Activated T-helper 1 cell treated with anti-CD3 and anti-CD28 coated beads, Interleukin-12 subunit alpha, Interleukin-12 subunit beta, Interleukin-2, Interleukin-4 antibody, amounts not matched to agents 30 ng/mL and 10 ng/mL and 1 ng/mL, durations not matched to agents 14 hours and 24 hours and 36 hours (primary cell): ENCODE measurements at regions of chr19 and their contacts with region 1.

Region 1: DNA sequence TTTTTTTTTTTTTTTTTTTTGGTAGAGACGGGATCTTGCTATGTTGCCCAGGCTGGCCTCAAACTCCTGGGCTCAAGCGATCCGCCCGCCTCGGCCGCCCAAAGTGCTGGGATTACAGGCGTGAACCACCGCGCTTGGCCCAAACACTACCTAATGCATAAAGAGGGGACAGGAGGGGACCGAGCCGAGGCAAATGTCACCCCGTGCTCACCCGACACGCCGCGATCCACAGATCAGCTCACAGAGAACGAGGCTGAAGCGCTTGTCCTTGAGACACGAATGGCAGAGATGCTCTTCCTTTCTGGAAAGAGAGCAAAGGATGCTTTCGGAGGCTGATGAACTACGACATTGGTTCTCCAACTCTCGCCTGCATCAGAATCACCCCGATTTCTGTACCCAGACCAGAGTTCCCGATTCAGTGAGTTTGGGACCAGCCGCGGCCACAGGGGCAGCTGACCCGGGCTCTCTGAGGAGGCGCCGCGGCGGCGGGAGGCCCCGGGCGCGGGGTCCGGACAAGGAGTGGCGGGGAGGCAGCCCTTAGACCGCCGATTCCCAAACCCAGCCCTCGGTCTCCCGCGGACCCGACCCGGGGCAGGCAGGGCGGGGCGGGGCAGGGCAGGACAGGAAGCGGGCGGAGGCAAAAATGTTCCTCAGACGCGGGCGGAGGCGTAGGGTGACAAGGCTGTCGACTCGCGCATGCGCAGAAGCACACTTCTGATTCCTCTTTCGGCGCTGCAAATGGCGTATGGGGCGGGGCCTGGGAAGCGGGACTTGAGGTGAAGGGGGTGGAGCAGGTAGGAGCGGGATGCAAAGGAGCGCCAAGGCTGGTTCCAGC is at the start of gene ZNF699:
- DNase-seq: peak; percentile 98
- H3K4me3 Mint-ChIP-seq: peak within 1 kb of the TSS; percentile 87
- H3K27ac Mint-ChIP-seq: peak within 1 kb of the TSS; percentile 94
- H3K4me1 Mint-ChIP-seq: peaks cover 29% of the 10 kb centered on the region
- H3K27me3 Mint-ChIP-seq: peaks cover 3% of the 10 kb centered on the region
- total RNA-seq, gene ZNF699: 4.7 and 5.0 TPM in 2 replicates

Region 2: GRCh38 chr19:9140159-9140874 is 169.0 kb before region 1 on chr19 and contains the start of gene ZNF317:
- intact Hi-C with region 1: loop called (anchors 1 kb)
- DNase-seq: peak; percentile 88
- H3K4me3 Mint-ChIP-seq: peak within 1 kb of the TSS; percentile 95
- H3K27ac Mint-ChIP-seq: peak within 1 kb of the TSS; percentile 94
- H3K4me1 Mint-ChIP-seq: peaks cover 33% of the 10 kb centered on the region
- H3K27me3 Mint-ChIP-seq: no peaks in the 10 kb centered on the region
- total RNA-seq, gene ZNF317: 50.7 and 53.3 TPM in 2 replicates

Region 3: DNA sequence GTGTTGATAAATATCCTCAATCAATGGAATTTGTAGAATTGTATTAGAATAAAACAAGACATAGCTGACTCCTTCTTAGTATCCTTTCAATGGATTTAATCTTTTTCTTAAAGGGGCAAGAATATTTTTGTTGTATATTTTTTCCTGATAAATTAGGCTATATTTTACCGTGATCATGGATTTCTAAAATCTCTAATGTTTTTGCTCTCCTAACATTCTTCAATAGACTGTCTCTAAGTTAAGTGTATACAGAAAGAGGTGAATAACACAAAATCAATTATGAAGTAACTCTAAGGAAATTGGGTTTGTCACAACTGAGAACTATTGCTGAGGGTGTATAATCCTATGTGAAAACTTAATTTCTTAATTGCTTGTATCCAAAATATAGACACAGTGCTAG is 58.7 kb before region 1 on chr19 and contains the start of gene OR7E24:
- intact Hi-C with region 1: no loop called
- DNase-seq: no peak
- H3K4me3 Mint-ChIP-seq: no peak within 1 kb of the TSS
- H3K27ac Mint-ChIP-seq: no peak within 1 kb of the TSS
- H3K4me1 Mint-ChIP-seq: no peaks in the 10 kb centered on the region
- H3K27me3 Mint-ChIP-seq: no peaks in the 10 kb centered on the region
- total RNA-seq, gene OR7E24: not detected in 2 replicates

Region 4: DNA sequence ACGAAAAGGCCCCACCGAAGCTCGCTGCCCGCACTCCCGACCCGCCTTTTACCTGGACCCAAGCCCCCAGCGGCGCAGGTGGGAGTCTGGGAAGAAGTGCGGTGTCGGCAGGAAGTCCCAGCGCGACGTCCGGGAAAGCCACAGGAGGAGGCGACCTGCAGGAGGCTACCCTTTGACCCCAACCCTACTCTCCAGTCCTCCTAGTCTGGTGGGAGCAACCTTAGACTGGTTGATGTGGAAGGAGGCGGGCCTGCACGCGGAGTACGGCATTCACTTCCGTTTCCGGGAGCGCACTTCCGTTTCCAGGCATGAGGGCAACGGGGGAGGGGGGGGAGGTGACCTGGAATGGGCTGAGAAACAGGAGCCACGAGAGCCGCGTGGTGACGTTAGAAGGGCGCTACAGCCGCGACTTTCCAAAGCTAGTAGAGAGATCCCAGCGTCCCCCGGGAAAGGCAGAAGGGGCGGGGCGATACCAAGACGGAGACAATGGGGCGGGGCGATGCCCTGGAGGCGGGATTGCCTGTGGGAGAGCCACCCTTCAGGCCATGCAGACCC is 97.5 kb after region 1 on chr19:
- intact Hi-C with region 1: no loop called
- DNase-seq: no peak
- H3K4me3 Mint-ChIP-seq: peak overlapping the region; percentile 67
- H3K27ac Mint-ChIP-seq: no peak overlapping the region
- H3K4me1 Mint-ChIP-seq: peaks cover 6% of the 10 kb centered on the region
- H3K27me3 Mint-ChIP-seq: no peaks in the 10 kb centered on the region

Region 5: DNA sequence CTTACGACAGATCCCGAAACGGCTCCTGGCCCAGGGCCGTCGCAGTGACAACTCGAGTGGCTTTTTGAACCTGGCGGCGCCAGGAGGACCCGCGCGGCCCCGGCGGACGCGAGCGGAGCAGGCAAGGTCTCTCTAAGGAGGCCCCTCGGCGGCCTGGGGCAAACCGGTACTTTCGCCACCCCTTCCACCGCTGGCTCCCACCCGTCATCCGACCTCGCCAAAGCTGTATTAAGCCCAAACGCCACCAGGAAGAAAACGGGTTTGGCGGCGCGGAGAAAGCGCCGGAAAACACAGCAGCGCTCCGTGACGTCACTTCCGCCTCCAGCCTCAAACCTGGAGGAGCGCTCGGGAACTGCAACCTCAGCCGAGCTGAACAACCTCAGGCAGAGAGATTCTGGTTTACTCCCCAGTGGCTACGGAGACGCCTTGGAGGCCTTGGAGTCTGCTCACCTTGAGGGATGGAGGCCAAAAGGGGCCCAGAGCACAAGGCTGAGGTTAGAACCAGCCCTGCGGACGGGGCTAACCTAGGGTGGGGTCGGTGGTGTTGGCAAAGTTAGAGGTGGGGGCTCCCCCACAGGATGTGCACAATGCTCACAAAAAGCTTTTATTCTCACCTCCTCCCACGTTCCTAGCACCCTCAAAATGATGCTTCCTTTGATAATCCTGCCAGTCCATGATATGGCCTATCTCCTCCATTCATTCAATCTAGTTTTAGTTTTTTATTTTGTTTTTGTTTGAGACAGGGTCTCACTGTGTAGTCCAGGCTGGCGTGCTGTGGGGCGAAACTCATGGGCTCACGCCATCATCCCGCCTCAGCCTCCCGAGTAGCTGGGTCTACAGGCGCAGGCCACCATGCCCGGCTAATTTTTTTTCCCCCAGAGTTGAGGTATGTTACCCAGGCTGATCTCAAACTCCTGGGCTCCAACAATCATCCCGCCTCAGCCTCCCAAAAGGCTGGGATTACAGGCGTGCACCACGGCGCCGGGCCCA is 126.2 kb after region 1 on chr19 and contains the start of gene ZNF266:
- intact Hi-C with region 1: loop called (anchors 1 kb)
- DNase-seq: peak; percentile 88
- H3K4me3 Mint-ChIP-seq: peak within 1 kb of the TSS; percentile 94
- H3K27ac Mint-ChIP-seq: peak within 1 kb of the TSS; percentile 97
- H3K4me1 Mint-ChIP-seq: peaks cover 29% of the 10 kb centered on the region
- H3K27me3 Mint-ChIP-seq: no peaks in the 10 kb centered on the region
- total RNA-seq, gene ZNF266: 25.3 and 28.2 TPM in 2 replicates

Region 6: GRCh38 chr19:9461938-9462337 is 152.6 kb after region 1 on chr19:
- intact Hi-C with region 1: no loop called
- DNase-seq: no peak
- H3K4me3 Mint-ChIP-seq: no peak overlapping the region
- H3K27ac Mint-ChIP-seq: no peak overlapping the region
- H3K4me1 Mint-ChIP-seq: no peaks in the 10 kb centered on the region
- H3K27me3 Mint-ChIP-seq: no peaks in the 10 kb centered on the region

Region 7: GRCh38 chr19:9584073-9584833 is 274.9 kb after region 1 on chr19 and contains the start of gene ZNF121:
- intact Hi-C with region 1: loop called (anchors 1 kb)
- DNase-seq: peak; percentile 76
- H3K4me3 Mint-ChIP-seq: peak within 1 kb of the TSS; percentile 93
- H3K27ac Mint-ChIP-seq: peak within 1 kb of the TSS; percentile 94
- H3K4me1 Mint-ChIP-seq: peaks cover 24% of the 10 kb centered on the region
- H3K27me3 Mint-ChIP-seq: no peaks in the 10 kb centered on the region
- total RNA-seq, gene ZNF121: 63.4 and 64.8 TPM in 2 replicates

Region 8: GRCh38 chr19:9785367-9786331 is 476.3 kb after region 1 on chr19:
- intact Hi-C with region 1: loop called (anchors 1 kb)
- DNase-seq: peak; percentile 90
- H3K4me3 Mint-ChIP-seq: peak overlapping the region; percentile 87
- H3K27ac Mint-ChIP-seq: peak overlapping the region; percentile 89
- H3K4me1 Mint-ChIP-seq: peaks cover 20% of the 10 kb centered on the region
- H3K27me3 Mint-ChIP-seq: no peaks in the 10 kb centered on the region